ENCODE measurements at regions of chr12 and their contacts with region 1.

Region 1: GRCh38 chr12:98572010-98572409 is 21.5 kb upstream of the SLC25A3 start:
- DNase-seq: no peak
- H3K4me3 ChIP-seq: no peak overlapping the region
- H3K27ac ChIP-seq: no peak overlapping the region
- H3K4me1 ChIP-seq: no peaks in the 10 kb centered on the region
- H3K27me3 ChIP-seq: no peaks in the 10 kb centered on the region
- CTCF ChIP-seq: no peak
- POLR2A ChIP-seq: no peak

Region 2: DNA sequence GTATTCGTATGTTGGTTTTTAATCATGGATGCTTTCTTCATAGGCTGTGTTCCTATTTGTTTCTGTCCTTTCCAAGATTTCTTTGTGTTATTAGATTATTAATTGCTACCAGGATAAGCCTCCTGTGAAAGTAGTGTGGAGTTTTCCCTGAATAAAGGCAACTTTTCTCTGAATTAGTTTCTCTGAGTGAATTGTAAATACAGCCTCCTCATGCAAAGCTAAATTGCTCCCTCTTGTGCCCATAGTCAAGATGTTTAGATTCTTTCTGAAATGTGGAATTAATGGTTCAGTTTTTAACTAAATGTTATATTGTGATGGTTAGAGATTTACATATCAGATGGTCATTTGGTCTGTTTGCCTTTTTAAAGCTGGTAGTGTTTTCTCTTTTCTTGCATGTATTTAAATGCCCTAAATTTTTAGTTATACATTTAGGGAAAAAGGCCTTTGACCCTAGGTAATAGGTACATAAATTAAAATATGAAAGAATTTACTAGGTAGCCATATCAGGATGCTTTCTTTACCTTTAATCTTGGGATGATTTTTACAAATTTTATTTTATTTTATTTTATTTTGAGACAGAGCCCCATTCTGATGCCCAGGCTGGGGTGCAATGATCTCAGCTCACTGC is 82.0 kb after region 1 on chr12:
- intact Hi-C with region 1: loop called (anchors 5 kb)
- DNase-seq: no peak
- H3K4me3 ChIP-seq: no peak overlapping the region
- H3K27ac ChIP-seq: no peak overlapping the region
- H3K4me1 ChIP-seq: no peaks in the 10 kb centered on the region
- H3K27me3 ChIP-seq: no peaks in the 10 kb centered on the region
- CTCF ChIP-seq: peak in 5 of 6 experiments; percentile 34 to 78 (median 59)
- POLR2A ChIP-seq: no peak